Dorsolateral prefrontal cortex (tissue), 120 donors: ENCODE measurements at regions of chr11 and their contacts with region 1.

Region 1: DNA sequence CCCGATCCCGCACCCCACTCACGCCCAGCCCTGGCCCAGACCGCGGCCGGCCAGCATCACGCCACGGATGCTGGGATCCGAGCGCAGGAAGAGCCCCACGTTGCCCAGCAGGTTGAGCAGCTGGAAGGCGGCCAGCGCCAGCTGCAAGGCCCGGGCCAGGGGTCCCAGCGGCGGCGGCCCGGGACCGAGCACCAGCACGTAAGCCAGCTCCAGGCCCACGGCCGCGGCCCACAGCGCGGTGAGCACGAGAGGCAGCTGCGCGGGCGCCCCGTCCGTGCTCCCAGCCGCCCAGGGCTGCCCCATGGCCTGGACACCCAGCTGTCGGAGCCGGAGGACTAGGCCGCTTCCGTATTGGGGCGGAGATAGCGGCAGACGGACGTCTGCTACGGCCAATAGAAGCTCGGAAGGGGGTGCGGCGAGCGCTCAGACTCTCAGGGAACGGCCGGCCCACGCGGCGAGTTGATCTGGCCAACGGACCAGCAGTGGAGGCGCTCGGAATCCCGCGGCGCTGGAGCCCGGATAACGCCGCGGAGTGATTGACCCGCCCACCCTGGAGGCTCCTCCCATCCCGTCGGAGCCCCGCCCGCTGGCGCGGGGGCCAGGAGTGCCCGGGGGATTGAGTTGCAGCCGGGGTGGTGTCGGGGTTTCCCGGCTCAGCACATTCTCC is at the start of gene ZDHHC24:
- DNase-seq: peak; percentile 94 to 99 (median 97)
- H3K4me3 ChIP-seq: peak within 1 kb of the TSS; percentile 59 to 99 (median 88)
- H3K27ac ChIP-seq: peak within 1 kb of the TSS in 44 of 59 donors; percentile 2 to 87 (median 55)
- H3K27me3 ChIP-seq: no peaks in the 10 kb centered on the region
- CTCF ChIP-seq: peak in 36 of 56 donors; percentile 5 to 62 (median 32)
- total RNA-seq, gene ZDHHC24: 9.6 to 20.9 (median 14.9) TPM

Region 2: DNA sequence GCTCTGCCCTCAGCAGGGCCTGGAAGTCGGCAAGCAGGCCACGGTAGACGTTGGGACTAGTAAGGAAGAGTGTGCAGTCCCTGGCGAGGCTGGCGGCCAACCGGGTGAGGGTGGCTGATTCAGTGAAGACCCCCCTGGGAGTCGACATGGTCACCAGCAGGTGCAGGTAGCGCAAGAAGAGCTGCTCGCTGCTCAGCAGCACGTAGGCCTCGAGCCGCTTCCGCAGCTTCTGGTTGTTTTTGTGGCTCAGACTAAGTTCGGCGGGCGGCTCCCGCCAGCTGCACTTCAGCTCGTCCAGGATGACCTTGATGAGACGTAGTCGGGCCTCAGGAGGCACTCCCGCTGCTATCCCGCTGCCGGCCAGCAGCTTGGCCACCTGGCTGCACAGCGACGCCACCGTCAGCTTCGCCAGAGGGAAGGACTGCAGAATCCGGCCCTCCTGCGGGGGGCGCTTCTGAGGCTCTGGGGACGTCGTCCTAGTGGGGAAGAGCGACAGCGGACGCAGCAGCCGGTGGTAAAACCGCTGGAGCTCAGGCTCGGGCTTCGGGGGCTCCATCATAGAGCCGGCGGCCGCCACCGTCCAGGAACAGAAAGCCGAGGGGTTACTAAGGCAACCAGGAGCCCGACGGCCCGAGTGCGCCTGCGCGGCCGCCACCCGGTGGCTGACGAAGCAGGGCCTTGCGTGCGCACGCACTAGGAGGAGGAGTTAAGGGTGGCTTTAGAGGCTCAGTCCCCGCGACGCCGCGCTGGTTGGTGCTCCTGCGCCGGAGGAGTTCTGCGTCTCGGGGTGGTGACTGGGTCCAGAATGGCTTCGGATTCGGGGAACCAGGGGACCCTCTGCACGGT is 46.8 kb after region 1 on chr11 and contains the starts of genes CCDC87 and CCS:
- intact Hi-C with region 1: loop called in 1 of 2 experiments (anchors 2 kb)
- DNase-seq: peak; percentile 96 to 98 (median 97)
- H3K4me3 ChIP-seq: peak within 1 kb of the TSS; percentile 57 to 100 (median 80)
- H3K27ac ChIP-seq: peak within 1 kb of the TSS in 57 of 59 donors; percentile 39 to 94 (median 83)
- H3K27me3 ChIP-seq: no peaks in the 10 kb centered on the region
- CTCF ChIP-seq: peak; percentile 38 to 86 (median 68)
- total RNA-seq, gene CCDC87: 0.26 to 2.4 (median 1.2) TPM
- total RNA-seq, gene CCS: 27.0 to 66.5 (median 43.1) TPM

Region 3: GRCh38 chr11:66784575-66784974 is 238.7 kb after region 1 on chr11:
- intact Hi-C with region 1: no loop called
- DNase-seq: no peak
- H3K4me3 ChIP-seq: no peak overlapping the region
- H3K27ac ChIP-seq: peak overlapping the region in 1 of 59 donors; percentile 14
- H3K27me3 ChIP-seq: no peaks in the 10 kb centered on the region
- CTCF ChIP-seq: no peak